ENCODE measurements at regions of chr12 and their contacts with region 1.

Region 1: DNA sequence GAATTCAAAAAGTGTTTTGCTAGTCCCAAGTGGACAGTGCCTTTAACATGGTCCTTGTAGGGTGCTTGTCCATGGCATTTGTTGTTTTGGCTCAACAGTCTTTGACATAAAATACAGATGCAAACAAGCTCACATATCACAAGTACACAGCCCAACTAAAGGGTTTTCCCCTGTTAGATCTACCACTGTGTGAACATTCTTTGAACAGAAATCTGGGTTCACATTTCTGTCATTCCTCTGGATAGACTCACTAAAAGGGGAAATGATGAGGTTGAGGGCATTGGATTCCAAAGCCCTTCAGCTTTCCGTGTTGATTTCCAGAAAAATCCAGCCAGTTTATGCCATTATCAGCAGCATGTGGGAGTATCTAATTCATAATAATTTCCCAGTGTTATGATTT is 54.1 kb downstream of the EP400 start:
- DNase-seq: no peak
- ATAC-seq: no peak
- H3K4me3 ChIP-seq: no peak overlapping the region
- H3K27ac ChIP-seq: no peak overlapping the region
- H3K4me1 ChIP-seq: no peaks in the 10 kb centered on the region
- H3K27me3 ChIP-seq: no peaks in the 10 kb centered on the region
- CTCF ChIP-seq: no peak
- EP300 ChIP-seq: no peak
- POLR2A ChIP-seq: no peak
- RAD21 ChIP-seq: no peak

Region 2: DNA sequence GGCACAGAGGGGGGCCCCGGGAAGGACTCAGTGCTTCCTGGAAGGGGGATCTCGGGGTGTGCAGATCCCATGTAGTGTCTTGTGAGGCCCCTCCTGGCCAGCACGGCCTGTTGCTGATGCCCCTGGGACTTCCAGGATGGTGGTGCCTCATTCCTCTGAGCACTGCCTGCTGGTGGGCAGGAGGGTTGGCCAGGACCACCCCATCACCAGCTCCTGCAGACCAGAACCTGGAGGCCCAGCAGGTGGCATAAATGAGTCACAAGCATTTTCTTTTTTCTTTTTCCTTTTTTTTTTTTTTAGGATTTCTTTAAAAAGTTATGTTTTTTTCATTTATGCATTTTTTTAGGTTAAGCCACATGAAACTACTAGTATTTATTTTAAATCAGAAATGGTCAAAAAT is 167.7 kb before region 1 on chr12:
- CTCF ChIA-PET with region 1: interaction called, 3 read pairs
- POLR2A ChIA-PET with region 1: no interaction called
- RAD21 ChIA-PET with region 1: no interaction called
- SMC1A ChIA-PET with region 1: interaction called, 3 read pairs
- in situ Hi-C with region 1: no loop called
- intact Hi-C with region 1: loop called (anchors 5 kb)
- DNase-seq: no peak
- ATAC-seq: peak; percentile 42; the same call in 2 of the 3 replicates
- H3K4me3 ChIP-seq: no peak overlapping the region
- H3K27ac ChIP-seq: no peak overlapping the region
- H3K4me1 ChIP-seq: no peaks in the 10 kb centered on the region
- H3K27me3 ChIP-seq: no peaks in the 10 kb centered on the region
- CTCF ChIP-seq: peak in 2 of 3 experiments; percentile 32 to 41; a peak in 3 of 6 replicates
- EP300 ChIP-seq: no peak
- POLR2A ChIP-seq: no peak
- RAD21 ChIP-seq: peak; percentile 48; the same call in 1 of the 2 replicates

Region 3: DNA sequence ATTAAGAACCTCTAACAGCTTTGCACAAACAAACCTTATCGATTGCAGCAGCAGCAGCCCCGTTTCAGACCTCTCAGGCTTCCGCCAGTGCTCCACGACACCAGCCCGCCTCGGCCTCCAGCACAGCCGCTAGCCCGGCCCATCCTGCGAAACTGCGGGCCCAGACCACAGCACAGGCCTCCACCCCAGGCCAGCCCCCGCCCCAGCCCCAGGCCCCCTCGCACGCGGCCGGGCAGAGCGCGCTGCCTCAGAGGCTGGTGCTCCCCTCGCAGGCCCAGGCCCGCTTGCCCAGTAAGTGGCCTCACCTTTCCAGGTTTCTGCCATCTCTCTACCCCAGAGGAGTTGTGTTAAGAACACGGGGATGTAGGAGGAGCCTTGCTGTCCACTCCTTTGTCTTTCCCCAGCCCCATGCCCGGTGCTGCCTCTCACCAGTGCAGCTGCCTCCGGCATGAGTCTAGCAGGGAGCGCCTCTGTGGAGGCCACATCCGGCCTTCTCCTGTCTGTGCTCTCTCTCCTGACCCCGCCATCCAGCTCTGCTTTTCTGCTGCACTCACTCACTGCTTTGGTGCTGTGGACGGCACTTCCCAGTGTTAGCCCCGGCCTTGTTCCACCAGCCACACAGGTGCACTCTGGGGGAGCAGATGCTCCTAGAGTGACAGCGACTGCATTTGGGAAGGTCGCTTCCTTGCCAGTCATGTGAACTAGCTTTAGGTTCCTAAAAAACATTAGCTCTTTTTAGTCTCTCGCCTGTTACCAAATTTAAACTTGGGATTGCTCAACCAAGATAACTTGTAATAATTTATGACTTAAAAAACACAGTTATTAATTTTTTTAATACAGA is 17.4 kb after region 1 on chr12:
- CTCF ChIA-PET with region 1: no interaction called
- POLR2A ChIA-PET with region 1: no interaction called
- RAD21 ChIA-PET with region 1: no interaction called
- SMC1A ChIA-PET with region 1: no interaction called
- in situ Hi-C with region 1: no loop called
- intact Hi-C with region 1: no loop called
- DNase-seq: no peak
- ATAC-seq: no peak
- H3K4me3 ChIP-seq: no peak overlapping the region
- H3K27ac ChIP-seq: no peak overlapping the region
- H3K4me1 ChIP-seq: no peaks in the 10 kb centered on the region
- H3K27me3 ChIP-seq: no peaks in the 10 kb centered on the region
- CTCF ChIP-seq: no peak
- EP300 ChIP-seq: no peak
- POLR2A ChIP-seq: no peak
- RAD21 ChIP-seq: no peak

Measured in GM12878 (cell line).